Endothelial cell of umbilical vein (primary cell): ENCODE measurements at regions of chr7 and their contacts with region 1.

Region 1: DNA sequence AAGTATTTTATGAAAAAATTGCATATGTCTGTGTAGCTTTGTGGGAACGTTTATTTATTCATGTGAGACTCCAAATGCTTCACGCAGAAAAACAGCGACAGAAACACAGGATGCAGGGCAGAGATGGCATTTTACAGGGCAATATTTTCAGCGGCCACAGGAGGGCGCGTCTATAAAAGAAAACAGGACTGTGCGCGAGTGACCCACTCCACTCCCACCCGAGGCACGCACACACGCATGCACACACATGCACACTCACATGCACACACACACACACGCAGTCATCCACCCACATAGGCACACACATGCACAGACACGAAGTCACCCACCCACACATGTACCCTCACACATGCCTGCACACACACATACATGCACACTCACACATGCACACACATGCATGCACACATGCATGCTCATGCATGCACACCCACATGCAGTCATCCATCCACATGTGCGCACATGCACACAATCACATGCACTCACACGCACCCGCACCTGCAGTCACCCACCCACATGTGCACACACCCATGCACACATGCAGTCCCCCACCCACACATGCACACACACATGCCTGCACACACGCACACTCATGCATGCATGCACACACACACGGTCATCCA is 96.3 kb downstream of the DNAJB6 start:
- DNase-seq: peak; percentile 40
- H3K4me3 ChIP-seq: no peak overlapping the region
- H3K27ac ChIP-seq: no peak overlapping the region
- H3K4me1 ChIP-seq: peaks cover 2% of the 10 kb centered on the region
- H3K27me3 ChIP-seq: no peaks in the 10 kb centered on the region
- CTCF ChIP-seq: peak; percentile 59 to 71
- POLR2A ChIP-seq: no peak

Region 2: GRCh38 chr7:157360483-157361025 is 72.5 kb before region 1 on chr7:
- CTCF ChIA-PET with region 1: no interaction called
- POLR2A ChIA-PET with region 1: no interaction called
- dilution Hi-C with region 1: no loop called
- intact Hi-C with region 1: no loop called
- DNase-seq: no peak
- H3K4me3 ChIP-seq: no peak overlapping the region
- H3K27ac ChIP-seq: no peak overlapping the region
- H3K4me1 ChIP-seq: peaks cover 7% of the 10 kb centered on the region
- H3K27me3 ChIP-seq: no peaks in the 10 kb centered on the region
- CTCF ChIP-seq: no peak
- POLR2A ChIP-seq: no peak

Region 3: DNA sequence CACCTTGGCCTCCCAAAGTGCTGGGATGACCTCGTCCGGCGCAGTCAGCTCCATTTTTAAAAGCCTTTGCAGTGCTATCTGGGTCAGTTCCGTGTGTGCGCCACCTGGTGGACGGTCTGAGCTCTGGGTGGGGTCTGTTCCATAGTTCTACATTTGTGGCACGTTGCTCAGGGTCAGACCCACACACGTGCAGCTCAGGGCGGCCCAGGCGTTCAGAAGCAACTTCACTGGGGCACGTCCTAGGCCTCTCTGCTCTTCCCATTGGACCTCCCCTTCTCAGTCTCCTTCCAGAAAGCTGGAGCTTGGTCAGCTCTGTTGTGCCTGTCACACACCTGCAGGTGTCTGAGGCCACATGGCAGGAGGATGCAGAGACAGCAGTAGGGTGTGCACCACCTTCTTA is 41.6 kb after region 1 on chr7:
- CTCF ChIA-PET with region 1: no interaction called
- POLR2A ChIA-PET with region 1: no interaction called
- dilution Hi-C with region 1: no loop called
- intact Hi-C with region 1: loop called (anchors 2 kb)
- DNase-seq: no peak
- H3K4me3 ChIP-seq: no peak overlapping the region
- H3K27ac ChIP-seq: no peak overlapping the region
- H3K4me1 ChIP-seq: no peaks in the 10 kb centered on the region
- H3K27me3 ChIP-seq: no peaks in the 10 kb centered on the region
- CTCF ChIP-seq: peak; percentile 24 to 26
- POLR2A ChIP-seq: no peak

Region 4: DNA sequence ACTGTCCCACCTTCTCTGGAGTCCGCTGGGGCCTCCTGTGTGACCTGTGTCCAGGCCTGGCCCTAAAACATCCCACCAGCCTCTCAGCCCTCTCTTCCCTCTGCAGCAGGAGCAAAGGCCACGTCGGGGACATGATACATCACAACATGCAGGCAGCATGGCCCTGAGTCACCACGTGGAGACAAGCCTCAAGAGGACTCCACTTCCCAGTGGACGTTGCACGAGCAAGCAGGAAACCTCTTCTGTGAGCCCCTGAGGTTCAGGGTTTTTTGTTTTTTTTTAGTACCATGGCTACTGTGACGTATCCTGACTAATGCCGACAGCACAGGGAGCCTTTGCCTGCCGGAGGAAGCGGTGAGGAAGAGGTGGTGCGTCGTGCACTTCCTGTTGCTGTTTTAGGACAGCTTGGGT is 69.6 kb after region 1 on chr7:
- CTCF ChIA-PET with region 1: no interaction called
- POLR2A ChIA-PET with region 1: no interaction called
- dilution Hi-C with region 1: no loop called
- intact Hi-C with region 1: loop called (anchors 1 kb)
- DNase-seq: peak; percentile 86
- H3K4me3 ChIP-seq: peak overlapping the region in 1 of 3 experiments; percentile 8
- H3K27ac ChIP-seq: peak overlapping the region; percentile 61
- H3K4me1 ChIP-seq: peaks cover 9% of the 10 kb centered on the region
- H3K27me3 ChIP-seq: no peaks in the 10 kb centered on the region
- CTCF ChIP-seq: no peak
- POLR2A ChIP-seq: no peak

Region 5: GRCh38 chr7:157568770-157569584 is 135.9 kb after region 1 on chr7:
- CTCF ChIA-PET with region 1: no interaction called
- POLR2A ChIA-PET with region 1: no interaction called
- dilution Hi-C with region 1: no loop called
- intact Hi-C with region 1: loop called (anchors 5 kb)
- DNase-seq: peak; percentile 11
- H3K4me3 ChIP-seq: peak overlapping the region; percentile 4 to 35 (median 29)
- H3K27ac ChIP-seq: no peak overlapping the region
- H3K4me1 ChIP-seq: no peaks in the 10 kb centered on the region
- H3K27me3 ChIP-seq: no peaks in the 10 kb centered on the region
- CTCF ChIP-seq: no peak
- POLR2A ChIP-seq: no peak

Region 6: DNA sequence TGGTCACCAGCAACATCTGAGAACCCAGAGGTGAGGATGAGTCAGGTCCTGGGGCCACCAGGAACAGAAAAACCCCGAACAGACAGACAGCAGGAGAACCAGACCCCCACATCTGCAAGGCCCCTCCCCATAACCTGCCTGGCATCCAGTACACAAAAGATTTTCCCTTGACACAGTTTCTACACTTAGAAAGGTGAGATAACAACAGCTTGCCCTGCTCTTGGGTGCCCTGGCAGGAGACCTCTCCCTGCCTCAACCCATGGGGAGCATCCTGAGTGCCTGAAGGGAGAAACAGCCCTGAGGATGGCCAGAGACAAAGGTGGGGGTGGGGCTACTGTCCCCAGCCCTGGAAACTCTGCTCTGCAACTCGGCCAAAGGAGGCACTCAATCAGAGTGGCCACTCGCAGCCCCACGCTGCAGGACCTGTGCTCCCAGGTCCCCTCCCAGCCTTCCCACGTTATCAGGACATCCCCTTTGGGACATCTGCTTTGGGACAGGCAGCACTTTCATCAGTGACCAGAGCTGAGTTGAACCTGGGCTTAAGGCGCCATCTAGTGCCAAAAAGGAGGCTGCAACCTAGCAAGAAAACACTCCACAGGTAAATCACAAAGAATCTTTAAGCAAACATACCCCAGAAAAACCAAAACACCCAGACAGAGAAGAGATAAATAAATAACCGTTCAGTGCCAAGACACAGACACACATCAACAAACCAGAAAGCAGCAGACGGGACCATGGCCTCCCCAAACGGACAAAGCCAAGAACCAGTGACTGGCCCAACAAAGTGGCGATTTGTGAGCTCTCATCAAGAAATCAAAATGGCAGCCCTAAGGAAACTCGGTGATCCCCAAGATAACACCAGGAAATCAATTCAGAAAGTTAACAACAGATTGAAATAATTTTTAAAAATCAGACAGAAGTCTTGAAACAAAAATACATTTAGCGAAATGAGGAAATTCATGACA is 920.8 kb after region 1 on chr7:
- CTCF ChIA-PET with region 1: no interaction called
- POLR2A ChIA-PET with region 1: no interaction called
- dilution Hi-C with region 1: no loop called
- intact Hi-C with region 1: loop called (anchors 2 kb)
- DNase-seq: no peak
- H3K4me3 ChIP-seq: no peak overlapping the region
- H3K27ac ChIP-seq: no peak overlapping the region
- H3K4me1 ChIP-seq: no peaks in the 10 kb centered on the region
- H3K27me3 ChIP-seq: no peaks in the 10 kb centered on the region
- CTCF ChIP-seq: peak in 1 of 2 donors; percentile 30
- POLR2A ChIP-seq: no peak

Region 7: DNA sequence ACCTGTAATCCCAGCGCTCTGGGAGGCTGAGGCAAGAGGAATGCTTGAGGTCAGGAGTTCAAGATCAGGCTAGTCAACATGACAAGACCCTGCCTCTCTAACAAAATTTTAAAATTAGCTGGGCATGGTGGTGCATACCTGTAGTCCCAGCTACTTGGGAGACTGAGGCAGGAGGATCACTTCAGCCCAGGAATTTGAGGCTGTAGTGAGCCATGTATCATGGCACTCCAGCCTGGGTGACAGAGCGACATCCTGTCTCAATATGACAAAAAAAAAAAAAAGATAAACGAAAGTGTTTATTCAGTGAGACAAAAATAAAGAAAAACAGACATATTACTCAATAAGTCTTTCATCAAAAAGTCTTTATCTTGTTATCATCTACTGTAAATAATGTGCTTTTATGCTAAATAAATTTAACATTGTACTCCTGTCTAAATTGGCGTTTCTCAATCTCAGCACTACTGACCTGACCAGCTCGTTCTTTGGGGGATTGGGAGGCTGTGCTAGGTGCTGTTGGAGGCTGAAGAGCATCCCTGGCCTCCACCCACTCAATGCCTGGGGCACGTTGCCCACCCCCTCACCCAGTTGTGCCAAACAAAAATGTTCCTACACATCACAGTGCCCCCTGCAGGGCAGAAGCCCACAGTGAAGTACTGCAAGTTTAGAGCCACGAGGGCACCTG is 1213.8 kb after region 1 on chr7:
- CTCF ChIA-PET with region 1: no interaction called
- POLR2A ChIA-PET with region 1: no interaction called
- dilution Hi-C with region 1: no loop called
- intact Hi-C with region 1: loop called (anchors 5 kb)
- DNase-seq: no peak
- H3K4me3 ChIP-seq: no peak overlapping the region
- H3K27ac ChIP-seq: no peak overlapping the region
- H3K4me1 ChIP-seq: peaks cover 16% of the 10 kb centered on the region
- H3K27me3 ChIP-seq: no peaks in the 10 kb centered on the region
- CTCF ChIP-seq: peak; percentile 41 to 59
- POLR2A ChIP-seq: no peak